Activated naive CD4-positive, alpha-beta T cell treated with anti-CD3 and anti-CD28 coated beads for 36 hours (primary cell): ENCODE measurements at regions of chr6 and their contacts with region 1.

Region 1: DNA sequence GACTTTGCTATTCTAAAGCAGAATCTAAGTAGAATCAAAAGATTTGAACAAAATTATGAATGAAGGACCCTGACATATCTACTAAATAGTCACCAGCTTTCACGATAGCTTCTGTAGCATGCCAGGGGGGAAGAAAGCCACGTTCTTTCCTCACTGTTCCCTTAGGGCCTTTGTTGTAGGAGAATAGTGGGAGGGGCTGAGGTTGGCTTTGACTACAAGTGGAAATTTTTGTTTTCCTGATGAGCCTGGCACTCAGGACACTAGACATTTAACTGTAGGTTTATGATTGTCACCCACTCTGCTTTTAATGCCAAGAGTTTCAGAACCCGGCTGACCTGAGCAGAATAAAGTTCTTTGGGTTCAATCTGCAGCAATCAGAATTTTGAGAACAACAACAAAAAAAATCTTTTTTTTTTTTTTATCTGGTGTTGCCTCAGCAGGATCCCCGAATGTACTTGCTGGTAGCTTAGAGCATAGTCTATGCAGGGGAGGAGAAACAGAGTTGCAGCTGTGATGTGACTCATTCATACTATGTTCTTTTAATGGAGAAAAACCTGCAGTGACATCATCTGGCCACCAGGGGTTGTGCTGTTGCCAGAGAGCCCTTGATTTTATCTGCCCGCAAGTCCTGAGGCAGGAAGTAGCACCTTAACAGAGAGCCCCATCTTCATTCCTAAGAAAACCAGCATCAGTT is 38.5 kb downstream of the TPD52L1 start:
- DNase-seq: peak; percentile 80
- H3K4me3 Mint-ChIP-seq: no peak overlapping the region
- H3K27ac Mint-ChIP-seq: no peak overlapping the region
- H3K4me1 Mint-ChIP-seq: peaks cover 2% of the 10 kb centered on the region
- H3K27me3 Mint-ChIP-seq: no peaks in the 10 kb centered on the region

Region 2: GRCh38 chr6:125153391-125154117 is 38.5 kb before region 1 on chr6 and contains the start of gene TPD52L1:
- CTCF ChIA-PET with region 1: interaction called, 9 read pairs
- intact Hi-C with region 1: loop called (anchors 1 kb)
- DNase-seq: peak; percentile 73
- H3K4me3 Mint-ChIP-seq: peak within 1 kb of the TSS; percentile 74
- H3K27ac Mint-ChIP-seq: no peak within 1 kb of the TSS
- H3K4me1 Mint-ChIP-seq: peaks cover 6% of the 10 kb centered on the region
- H3K27me3 Mint-ChIP-seq: peaks cover 28% of the 10 kb centered on the region
- total RNA-seq, gene TPD52L1: 5.6 to 5.7 TPM

Region 3: GRCh38 chr6:125203395-125203794 is 11.3 kb after region 1 on chr6:
- CTCF ChIA-PET with region 1: interaction called, 11 read pairs
- intact Hi-C with region 1: no loop called
- DNase-seq: no peak
- H3K4me3 Mint-ChIP-seq: no peak overlapping the region
- H3K27ac Mint-ChIP-seq: no peak overlapping the region
- H3K4me1 Mint-ChIP-seq: no peaks in the 10 kb centered on the region
- H3K27me3 Mint-ChIP-seq: peaks cover 5% of the 10 kb centered on the region

Region 4: GRCh38 chr6:125279961-125280360 is 87.9 kb after region 1 on chr6:
- CTCF ChIA-PET with region 1: no interaction called
- intact Hi-C with region 1: loop called (anchors 5 kb)
- DNase-seq: no peak
- H3K4me3 Mint-ChIP-seq: no peak overlapping the region
- H3K27ac Mint-ChIP-seq: no peak overlapping the region
- H3K4me1 Mint-ChIP-seq: peaks cover 29% of the 10 kb centered on the region
- H3K27me3 Mint-ChIP-seq: no peaks in the 10 kb centered on the region

Region 5: GRCh38 chr6:125301435-125302391 is 109.7 kb after region 1 on chr6 and contains the start of gene HDDC2:
- CTCF ChIA-PET with region 1: interaction called, 3 read pairs
- intact Hi-C with region 1: loop called (anchors 1 kb)
- DNase-seq: peak; percentile 38
- H3K4me3 Mint-ChIP-seq: peak within 1 kb of the TSS; percentile 88
- H3K27ac Mint-ChIP-seq: peak within 1 kb of the TSS; percentile 93
- H3K4me1 Mint-ChIP-seq: peaks cover 48% of the 10 kb centered on the region
- H3K27me3 Mint-ChIP-seq: no peaks in the 10 kb centered on the region
- total RNA-seq, gene HDDC2: 117 to 127 TPM

Region 6: DNA sequence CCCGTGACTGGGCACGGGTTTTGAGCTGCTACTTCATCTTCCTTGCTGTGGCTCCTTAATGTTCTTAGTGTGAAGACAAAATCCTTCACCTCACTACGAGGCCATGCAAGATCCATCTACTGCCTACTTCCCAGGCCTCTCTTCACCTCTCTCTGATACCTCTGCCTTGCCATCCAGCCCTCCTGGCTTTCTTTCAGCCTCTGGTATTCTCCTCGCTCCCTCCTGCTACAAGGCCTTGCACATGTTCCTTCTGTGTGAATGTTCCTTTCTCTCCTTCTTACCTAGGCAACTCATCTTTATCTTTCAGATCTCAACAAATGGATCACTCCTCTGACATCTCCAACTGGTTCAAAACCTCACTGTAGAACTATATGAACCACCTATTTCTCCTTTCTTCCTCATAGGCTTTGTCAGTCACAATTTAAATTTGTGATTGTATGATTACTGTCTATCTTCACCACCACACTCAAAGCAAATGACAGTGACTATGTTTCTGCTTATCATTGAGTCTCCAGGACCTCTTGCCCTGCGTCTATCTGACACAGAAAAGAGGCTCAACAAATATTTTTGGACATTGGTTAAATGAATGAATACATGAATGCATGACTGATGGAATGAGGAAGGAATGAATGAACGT is 577.2 kb after region 1 on chr6:
- CTCF ChIA-PET with region 1: no interaction called
- intact Hi-C with region 1: loop called (anchors 1 kb)
- DNase-seq: no peak
- H3K4me3 Mint-ChIP-seq: no peak overlapping the region
- H3K27ac Mint-ChIP-seq: no peak overlapping the region
- H3K4me1 Mint-ChIP-seq: peaks cover 10% of the 10 kb centered on the region
- H3K27me3 Mint-ChIP-seq: peaks cover 3% of the 10 kb centered on the region